Right lobe of liver (tissue), 6 donors: ENCODE measurements at regions of chr13 and their contacts with region 1.

Region 1: GRCh38 chr13:99656092-99656745 is 154.9 kb downstream of the TM9SF2 start:
- DNase-seq: peak; percentile 66 to 89 (median 75)
- ATAC-seq: peak; percentile 79 to 90 (median 82)
- H3K4me3 ChIP-seq: peak overlapping the region; percentile 10 to 50 (median 46)
- H3K27ac ChIP-seq: peak overlapping the region; percentile 79 to 99 (median 98)
- H3K4me1 ChIP-seq: peaks cover 0 to 26% (median 11%) of the 10 kb centered on the region in 4 donors
- H3K27me3 ChIP-seq: no peaks in the 10 kb centered on the region
- CTCF ChIP-seq: peak; percentile 88 to 94 (median 92)
- POLR2A ChIP-seq: peak; percentile 8

Region 2: GRCh38 chr13:99778500-99778899 is 122.3 kb after region 1 on chr13:
- intact Hi-C with region 1: no loop called
- DNase-seq: no peak
- ATAC-seq: no peak
- H3K4me3 ChIP-seq: no peak overlapping the region
- H3K27ac ChIP-seq: no peak overlapping the region
- H3K4me1 ChIP-seq: no peaks in the 10 kb centered on the region
- H3K27me3 ChIP-seq: no peaks in the 10 kb centered on the region
- CTCF ChIP-seq: no peak
- POLR2A ChIP-seq: no peak

Region 3: DNA sequence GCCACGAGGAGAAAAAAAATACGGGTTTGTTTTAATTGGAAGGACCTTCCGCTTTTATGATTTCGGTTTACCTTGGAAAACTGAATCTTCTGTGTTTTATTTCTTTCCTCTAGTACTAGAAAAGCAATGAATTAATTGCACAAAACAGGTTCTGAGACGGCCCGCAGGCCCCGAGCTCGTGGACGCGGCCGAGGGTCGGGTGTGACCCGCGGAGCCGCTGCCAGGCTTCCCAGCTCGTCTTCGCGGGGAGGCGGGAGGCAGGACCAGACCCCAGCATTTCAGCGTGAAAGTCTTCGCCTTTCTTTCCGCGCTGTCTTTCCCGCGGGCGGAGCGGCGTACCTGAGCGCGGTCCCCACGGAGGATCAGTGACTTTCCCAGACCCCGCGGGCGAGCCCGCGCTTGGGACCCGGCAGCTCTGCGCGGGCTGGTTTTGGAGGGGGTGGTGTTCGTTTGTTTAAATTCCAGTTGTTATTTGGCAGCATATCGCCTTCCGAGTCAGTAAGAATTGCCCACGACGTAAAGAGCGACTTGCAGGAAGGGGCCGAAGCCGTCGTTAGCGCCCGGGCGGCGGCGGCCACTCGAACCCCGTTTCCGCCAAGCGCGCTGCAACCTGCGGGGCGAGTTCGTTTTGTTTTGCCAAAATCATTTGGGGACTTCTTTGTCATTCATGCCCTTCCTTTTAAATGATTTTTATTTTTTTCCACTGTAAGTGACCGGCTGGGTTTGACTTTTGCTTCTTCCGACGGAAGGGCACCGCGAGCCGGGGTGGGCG is 239.2 kb after region 1 on chr13:
- intact Hi-C with region 1: loop called in 1 of 2 experiments (anchors 10 kb)
- DNase-seq: no peak
- ATAC-seq: peak; percentile 20 to 60 (median 31)
- H3K4me3 ChIP-seq: peak overlapping the region; percentile 43 to 45 (median 43)
- H3K27ac ChIP-seq: no peak overlapping the region
- H3K4me1 ChIP-seq: peaks cover 0 to 8% (median 0%) of the 10 kb centered on the region in 4 donors
- H3K27me3 ChIP-seq: no peaks in the 10 kb centered on the region
- CTCF ChIP-seq: no peak
- POLR2A ChIP-seq: no peak